ENCODE measurements at regions of chr11 and their contacts with region 1.

Region 1: DNA sequence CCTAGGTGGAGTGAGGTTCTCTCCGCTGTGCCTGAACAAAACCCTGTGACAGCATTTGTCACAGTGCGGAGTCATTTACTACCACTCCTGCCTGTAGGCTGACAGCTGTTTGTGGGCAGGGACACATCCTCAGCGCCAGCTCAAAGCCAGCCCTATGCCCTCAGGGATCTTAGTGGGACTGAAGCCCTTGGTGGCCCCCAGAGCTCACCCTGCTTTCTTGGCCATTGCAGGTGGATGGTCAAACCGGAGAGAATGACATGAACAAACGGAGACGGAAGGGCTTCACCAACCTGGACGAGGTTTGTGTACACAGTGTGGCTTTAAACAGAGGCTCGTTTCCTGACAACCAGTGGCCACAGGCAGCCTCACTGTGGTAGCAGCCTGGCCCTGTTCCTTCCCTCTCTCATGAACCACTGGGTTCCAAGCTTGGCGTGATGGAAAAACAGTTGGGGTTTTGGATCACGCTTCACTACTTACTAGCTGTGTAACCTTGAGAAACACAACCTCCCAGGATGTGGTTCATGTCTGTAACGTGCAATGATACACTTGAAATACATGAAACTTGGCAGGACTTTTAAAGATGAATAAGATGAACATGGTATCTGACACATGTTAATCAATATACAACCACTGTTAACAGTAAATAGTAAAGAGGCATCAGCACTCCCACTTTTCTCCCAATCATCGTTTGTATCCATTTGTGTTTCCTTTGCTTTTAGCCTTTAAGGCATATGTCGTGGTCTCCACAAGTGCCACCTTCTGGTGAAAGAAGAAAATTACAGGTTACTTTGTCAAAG is 125.8 kb downstream of the MICAL2 start:
- DNase-seq: peak in 1 of 2 donors; percentile 77
- H3K4me3 ChIP-seq: no peak overlapping the region
- H3K27ac ChIP-seq: peak overlapping the region; percentile 94 to 98
- H3K4me1 ChIP-seq: peaks cover 17 to 92% of the 10 kb centered on the region in 2 donors
- H3K27me3 ChIP-seq: no peaks in the 10 kb centered on the region
- CTCF ChIP-seq: peak; percentile 60 to 64 (median 60)

Region 2: DNA sequence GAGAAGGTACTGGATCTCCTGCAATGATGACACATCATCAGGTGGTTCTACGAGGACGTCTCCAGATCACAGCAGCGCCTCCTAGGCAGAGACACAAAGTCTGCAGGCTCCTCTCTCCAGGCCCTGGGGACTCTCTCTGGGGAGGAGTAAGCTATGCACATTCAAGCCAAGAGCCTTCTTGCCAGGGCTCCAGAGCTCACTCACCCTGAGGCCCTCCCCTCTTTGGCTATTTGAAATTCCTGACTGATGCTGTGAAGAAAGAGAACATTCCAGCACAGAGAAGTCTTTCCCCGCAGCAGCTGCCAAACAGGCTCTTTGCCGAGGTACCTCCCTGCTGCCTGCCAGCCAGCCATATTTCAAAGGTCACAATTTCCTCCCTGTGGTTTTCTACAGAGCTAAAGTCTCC is 1088.0 kb before region 1 on chr11:
- intact Hi-C with region 1: loop called (anchors 10 kb)
- DNase-seq: peak; percentile 43 to 93
- H3K4me3 ChIP-seq: no peak overlapping the region
- H3K27ac ChIP-seq: peak overlapping the region; percentile 46
- H3K4me1 ChIP-seq: peaks cover 1 to 24% of the 10 kb centered on the region in 2 donors
- H3K27me3 ChIP-seq: no peaks in the 10 kb centered on the region
- CTCF ChIP-seq: peak in 2 of 3 experiments; percentile 42 to 46

Region 3: DNA sequence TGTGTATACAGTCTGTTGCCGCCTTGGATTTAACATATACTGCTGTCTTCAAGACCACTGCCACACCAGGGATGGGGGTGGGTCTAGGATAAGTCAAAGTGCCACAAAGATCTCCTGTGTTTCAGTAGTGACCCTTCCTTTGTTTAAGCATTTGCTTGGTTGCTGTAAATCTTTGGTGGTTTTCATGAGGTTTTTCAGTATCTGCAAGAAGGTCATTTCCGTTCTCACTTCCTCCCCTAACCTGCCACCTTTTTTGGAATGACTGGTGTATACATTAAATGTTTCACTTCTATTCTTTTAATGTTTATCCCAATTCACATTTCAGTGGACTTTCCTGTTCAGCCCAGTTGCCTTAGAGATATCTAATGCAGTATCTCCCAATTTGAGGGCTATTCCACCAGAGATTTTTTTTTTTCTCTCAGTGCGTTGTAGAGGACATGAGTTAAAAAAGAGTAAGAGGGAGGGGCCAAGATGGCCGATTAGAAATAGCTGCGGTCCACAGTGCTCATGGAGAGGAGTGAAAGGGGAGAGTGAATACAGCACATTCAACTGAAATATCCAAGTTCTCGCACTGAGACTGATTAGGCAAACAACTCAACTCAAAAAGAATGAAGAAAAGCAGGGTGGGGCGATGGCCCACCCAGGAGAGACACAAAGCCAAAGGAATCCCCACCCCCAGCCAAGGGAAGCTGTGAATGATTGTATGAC is 351.2 kb before region 1 on chr11:
- intact Hi-C with region 1: no loop called
- DNase-seq: no peak
- H3K4me3 ChIP-seq: no peak overlapping the region
- H3K27ac ChIP-seq: no peak overlapping the region
- H3K4me1 ChIP-seq: no peaks in the 10 kb centered on the region
- H3K27me3 ChIP-seq: no peaks in the 10 kb centered on the region
- CTCF ChIP-seq: no peak

Region 4: DNA sequence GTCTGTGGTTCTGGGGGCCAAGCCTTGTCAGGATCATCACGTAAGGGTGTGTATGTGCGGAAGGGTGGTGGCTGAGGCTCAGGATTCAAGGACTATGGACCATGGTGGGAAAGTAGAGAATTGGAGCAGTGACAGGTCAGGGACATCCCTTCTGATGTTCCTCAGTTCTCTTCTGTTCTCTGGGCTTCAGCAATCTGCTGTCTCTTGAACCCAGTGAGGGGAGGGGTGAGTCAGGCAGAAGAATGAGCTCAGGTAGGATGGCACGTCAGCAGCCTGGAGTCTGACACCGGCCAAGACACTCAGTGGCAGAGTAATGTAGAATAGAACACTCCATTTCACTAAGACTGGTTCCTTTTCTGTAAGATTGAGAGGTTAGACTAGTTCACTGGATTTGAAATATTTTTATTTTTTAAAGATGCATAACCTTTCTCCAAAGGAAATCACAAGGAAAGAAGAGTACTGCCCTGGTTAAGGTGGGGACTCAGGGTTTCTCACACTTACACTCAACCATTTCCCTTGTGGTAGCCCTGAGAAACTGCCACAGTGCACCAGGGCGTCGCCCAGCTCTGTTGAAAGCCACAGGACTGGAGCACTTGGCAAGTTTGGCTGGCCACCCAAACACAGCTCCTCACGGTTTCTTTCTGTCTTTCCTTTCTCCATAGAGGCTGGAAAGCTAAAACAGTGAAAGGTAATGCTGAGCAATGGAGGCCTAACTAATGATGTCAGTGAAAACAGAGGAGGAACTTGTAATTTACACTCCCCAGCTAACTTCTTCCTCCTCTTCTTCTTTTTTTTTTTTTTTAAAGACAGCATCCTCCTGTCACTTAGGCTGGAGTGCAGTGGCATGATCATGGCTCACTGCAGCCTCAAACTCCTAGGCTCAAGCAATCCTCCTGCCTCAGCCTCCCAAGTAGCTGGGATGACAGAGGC is 148.8 kb before region 1 on chr11:
- intact Hi-C with region 1: loop called (anchors 2 kb)
- DNase-seq: peak in 1 of 2 donors; percentile 82
- H3K4me3 ChIP-seq: peak overlapping the region; percentile 46 to 69
- H3K27ac ChIP-seq: peak overlapping the region; percentile 98 to 99
- H3K4me1 ChIP-seq: peaks cover 24 to 59% of the 10 kb centered on the region in 2 donors
- H3K27me3 ChIP-seq: no peaks in the 10 kb centered on the region
- CTCF ChIP-seq: peak; percentile 20 to 35 (median 27)

Region 5: GRCh38 chr11:12122083-12122482 is 114.1 kb before region 1 on chr11:
- intact Hi-C with region 1: loop called (anchors 5 kb)
- DNase-seq: peak in 1 of 2 donors; percentile 4
- H3K4me3 ChIP-seq: peak overlapping the region in 1 of 2 donors; percentile 14
- H3K27ac ChIP-seq: peak overlapping the region; percentile 71 to 92
- H3K4me1 ChIP-seq: peaks cover 33 to 93% of the 10 kb centered on the region in 2 donors
- H3K27me3 ChIP-seq: no peaks in the 10 kb centered on the region
- CTCF ChIP-seq: peak; percentile 58 to 65 (median 61)

Region 6: DNA sequence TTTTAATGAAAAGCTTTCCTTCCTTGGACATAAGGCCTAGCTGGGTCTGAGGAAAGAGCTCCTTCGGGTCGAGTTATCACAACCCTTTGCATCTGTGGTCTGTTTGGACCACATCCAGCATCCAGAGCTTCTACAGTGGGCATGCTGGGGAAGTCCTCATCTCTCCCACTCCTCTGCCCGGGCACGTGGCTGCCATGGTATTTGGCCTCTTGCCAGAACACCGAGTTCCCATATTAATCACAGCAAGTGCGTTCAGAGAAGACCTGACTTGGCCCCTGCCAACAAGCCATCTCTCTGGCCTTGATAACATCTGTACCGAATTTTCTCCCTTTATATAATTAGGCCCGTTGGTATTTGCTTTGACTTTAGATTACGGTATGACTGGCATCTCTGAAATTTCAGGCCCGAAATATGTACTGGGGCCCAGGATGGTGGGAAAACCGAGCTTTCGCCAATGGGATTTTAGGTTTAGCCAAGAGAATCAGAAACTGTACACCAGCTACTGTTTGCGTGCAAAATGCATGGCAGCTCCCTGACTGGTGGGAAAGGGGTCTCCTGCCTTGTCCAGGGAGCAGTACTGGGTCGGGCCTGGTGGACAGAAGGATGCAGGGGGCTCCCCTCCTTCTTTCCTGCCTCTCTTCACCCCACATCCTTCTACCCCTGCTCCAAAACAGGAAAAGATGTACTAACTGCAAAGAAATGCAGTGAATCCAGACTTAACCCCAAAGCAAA is 35.7 kb before region 1 on chr11:
- intact Hi-C with region 1: loop called (anchors 2 kb)
- DNase-seq: peak in 1 of 2 donors; percentile 88
- H3K4me3 ChIP-seq: no peak overlapping the region
- H3K27ac ChIP-seq: peak overlapping the region; percentile 88 to 94
- H3K4me1 ChIP-seq: peaks cover 33 to 65% of the 10 kb centered on the region in 2 donors
- H3K27me3 ChIP-seq: no peaks in the 10 kb centered on the region
- CTCF ChIP-seq: no peak

Measured in ascending aorta (tissue), 2 donors.